Tibial artery (tissue), 4 donors: ENCODE measurements at regions of chr9 and their contacts with region 1.

Region 1: GRCh38 chr9:128455849-128456612 is at the start of gene ODF2:
- DNase-seq: peak; percentile 96 to 98
- H3K4me3 ChIP-seq: peak within 1 kb of the TSS; percentile 87 to 88
- H3K27ac ChIP-seq: peak within 1 kb of the TSS; percentile 87 to 88
- H3K4me1 ChIP-seq: peaks cover 0 to 11% (median 10%) of the 10 kb centered on the region in 4 donors
- H3K27me3 ChIP-seq: no peaks in the 10 kb centered on the region
- CTCF ChIP-seq: peak in 1 of 2 experiments; percentile 11

Region 2: DNA sequence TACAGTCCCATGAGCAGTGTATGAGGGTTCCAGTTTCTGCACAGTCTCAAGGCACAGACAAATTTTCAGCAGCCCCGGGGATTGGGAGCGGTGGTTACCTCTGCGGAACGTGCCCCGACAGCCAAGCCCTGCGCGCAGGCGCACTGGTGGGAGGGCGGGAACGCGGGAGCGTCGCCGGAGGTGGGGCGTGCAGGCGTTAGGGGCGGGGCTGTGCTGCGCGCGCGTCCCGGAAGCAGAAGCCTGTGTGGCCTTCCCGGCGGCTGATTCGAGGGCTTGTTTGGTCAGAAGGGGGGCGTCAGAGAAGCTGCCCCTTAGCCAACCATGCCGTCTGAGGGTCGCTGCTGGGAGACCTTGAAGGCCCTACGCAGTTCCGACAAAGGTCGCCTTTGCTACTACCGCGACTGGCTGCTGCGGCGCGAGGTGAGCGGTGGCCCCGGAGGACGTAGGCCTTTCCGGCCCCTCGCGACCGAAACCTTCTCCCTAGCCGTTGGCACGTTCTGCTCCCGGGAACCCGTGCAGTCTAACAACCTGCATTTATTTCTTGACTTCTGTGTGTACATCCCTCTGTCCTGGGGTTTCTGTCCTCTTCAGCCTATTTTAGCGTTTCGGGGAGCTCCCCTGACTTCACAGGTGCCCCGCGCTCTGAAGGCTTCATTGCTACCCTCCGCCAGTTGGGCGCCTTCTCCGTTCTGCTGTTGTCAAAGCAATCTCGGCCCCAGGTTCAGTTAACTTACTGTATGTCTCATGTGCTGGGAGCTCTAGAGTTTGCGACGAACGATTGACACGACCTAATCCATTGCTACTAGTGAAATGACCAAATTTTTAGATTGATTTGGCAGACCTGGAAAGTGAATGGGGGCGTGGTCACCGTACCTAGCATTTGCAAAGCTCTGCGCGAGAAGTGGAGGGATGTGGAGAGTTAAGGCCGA is 48.7 kb after region 1 on chr9 and contains the start of gene GLE1:
- intact Hi-C with region 1: loop called (anchors 5 kb)
- DNase-seq: peak; percentile 93 to 96
- H3K4me3 ChIP-seq: peak within 1 kb of the TSS; percentile 87 to 88
- H3K27ac ChIP-seq: peak within 1 kb of the TSS; percentile 83 to 88
- H3K4me1 ChIP-seq: peaks cover 0 to 39% (median 25%) of the 10 kb centered on the region in 4 donors
- H3K27me3 ChIP-seq: no peaks in the 10 kb centered on the region
- CTCF ChIP-seq: no peak

Region 3: GRCh38 chr9:128552153-128552743 is 96.2 kb after region 1 on chr9 and contains the start of gene SPTAN1:
- intact Hi-C with region 1: loop called (anchors 10 kb)
- DNase-seq: peak; percentile 86 to 95
- H3K4me3 ChIP-seq: peak within 1 kb of the TSS; percentile 89 to 95
- H3K27ac ChIP-seq: peak within 1 kb of the TSS; percentile 96 to 97
- H3K4me1 ChIP-seq: peaks cover 0 to 60% (median 43%) of the 10 kb centered on the region in 4 donors
- H3K27me3 ChIP-seq: no peaks in the 10 kb centered on the region
- CTCF ChIP-seq: peak in 1 of 2 experiments; percentile 41